ENCODE measurements at regions of chr17 and their contacts with region 1.

Region 1: GRCh38 chr17:21164211-21164610 is 37.4 kb downstream of the DHRS7B start:
- DNase-seq: no peak
- H3K4me3 ChIP-seq: no peak overlapping the region
- H3K27ac ChIP-seq: no peak overlapping the region
- H3K4me1 ChIP-seq: no peaks in the 10 kb centered on the region
- H3K27me3 ChIP-seq: no peaks in the 10 kb centered on the region
- CTCF ChIP-seq: no peak
- EP300 ChIP-seq: no peak
- POLR2A ChIP-seq: no peak
- RAD21 ChIP-seq: no peak; a peak in 1 of 4 replicates

Region 2: DNA sequence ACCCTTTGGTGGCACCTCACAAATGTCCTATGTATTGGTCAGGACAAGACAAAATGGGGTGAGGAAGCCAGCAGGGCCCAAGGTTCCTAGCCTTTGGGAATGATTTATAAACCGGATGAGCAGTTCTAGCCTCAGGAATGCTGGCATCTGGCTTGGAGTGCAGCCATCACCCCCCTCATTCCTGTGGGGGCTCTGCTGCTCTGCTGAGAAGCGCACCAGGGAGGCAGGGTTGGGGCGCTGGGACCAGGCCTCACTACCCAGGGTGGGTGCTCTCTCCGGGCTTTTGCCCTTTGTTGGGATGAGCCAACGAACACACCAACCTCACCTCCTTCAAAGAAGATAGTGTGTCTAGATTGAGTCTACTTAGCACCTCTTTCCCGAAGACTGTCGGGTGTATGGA is 10.5 kb after region 1 on chr17:
- CTCF ChIA-PET with region 1: interaction called, 16 read pairs
- POLR2A ChIA-PET with region 1: interaction called, 3 read pairs
- DNase-seq: no peak
- H3K4me3 ChIP-seq: no peak overlapping the region
- H3K27ac ChIP-seq: no peak overlapping the region
- H3K4me1 ChIP-seq: no peaks in the 10 kb centered on the region
- H3K27me3 ChIP-seq: no peaks in the 10 kb centered on the region
- CTCF ChIP-seq: no peak
- EP300 ChIP-seq: no peak
- POLR2A ChIP-seq: no peak
- RAD21 ChIP-seq: no peak

Measured in H1 (cell line).